K562 (cell line): ENCODE measurements at regions of chr1 and their contacts with region 1.

Region 1: DNA sequence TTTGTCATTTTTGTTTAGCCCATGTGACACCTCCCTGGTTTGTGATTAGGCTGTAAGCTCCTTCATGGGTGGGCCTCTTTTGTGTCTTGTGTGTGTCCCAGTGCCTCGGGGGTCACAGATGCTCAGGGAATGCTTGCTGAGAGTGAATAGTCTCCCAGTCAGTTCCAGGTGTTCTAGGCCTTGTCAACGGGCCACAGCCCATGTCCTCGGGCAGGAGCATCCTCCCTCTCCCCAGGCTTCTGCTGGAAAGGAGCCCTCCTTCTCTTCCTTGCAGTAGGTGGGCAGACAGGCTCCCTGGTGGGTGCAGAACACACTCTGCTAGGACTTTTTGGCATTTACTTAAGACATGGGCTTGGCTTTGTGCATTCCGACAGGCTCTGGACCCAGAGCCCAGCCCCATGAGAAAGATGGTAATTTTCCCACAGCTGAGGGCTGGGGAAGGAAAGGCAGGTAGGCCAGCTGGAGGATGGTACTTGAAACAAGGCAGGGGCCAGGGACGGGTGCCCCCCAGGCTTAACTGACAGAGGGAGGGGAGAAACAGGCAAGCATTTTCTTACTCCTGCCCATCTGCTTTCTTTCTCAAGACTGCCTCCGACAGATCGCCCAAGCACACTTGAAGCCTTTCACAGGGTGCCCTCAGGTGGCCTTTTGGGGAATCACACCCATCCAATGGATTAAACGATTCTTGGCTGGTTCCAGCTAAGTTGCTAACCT is 7.1 kb upstream of the CPLANE2 start:
- DNase-seq: peak; percentile 77 to 91 (median 82)
- ATAC-seq: peak; percentile 79
- H3K4me3 ChIP-seq: no peak overlapping the region
- H3K27ac ChIP-seq: no peak overlapping the region
- H3K4me1 ChIP-seq: peaks cover 13 to 36% of the 10 kb centered on the region in 2 experiments
- H3K27me3 ChIP-seq: no peaks in the 10 kb centered on the region
- CTCF ChIP-seq: peak; percentile 92 to 98 (median 97)
- EP300 ChIP-seq: no peak
- POLR2A ChIP-seq: no peak
- RAD21 ChIP-seq: peak; percentile 92 to 93

Region 2: GRCh38 chr1:15803354-15803753 is 440.7 kb before region 1 on chr1:
- CTCF ChIA-PET with region 1: no interaction called
- POLR2A ChIA-PET with region 1: no interaction called
- in situ Hi-C with region 1: no loop called
- intact Hi-C with region 1: no loop called
- DNase-seq: peak; percentile 32 to 63 (median 44)
- ATAC-seq: peak; percentile 70
- H3K4me3 ChIP-seq: no peak overlapping the region
- H3K27ac ChIP-seq: no peak overlapping the region
- H3K4me1 ChIP-seq: peaks cover 24 to 25% of the 10 kb centered on the region in 2 experiments
- H3K27me3 ChIP-seq: no peaks in the 10 kb centered on the region
- CTCF ChIP-seq: peak; percentile 59 to 70 (median 67)
- EP300 ChIP-seq: no peak
- POLR2A ChIP-seq: no peak
- RAD21 ChIP-seq: peak; percentile 12 to 66; a peak in 2 of 4 replicates

Region 3: DNA sequence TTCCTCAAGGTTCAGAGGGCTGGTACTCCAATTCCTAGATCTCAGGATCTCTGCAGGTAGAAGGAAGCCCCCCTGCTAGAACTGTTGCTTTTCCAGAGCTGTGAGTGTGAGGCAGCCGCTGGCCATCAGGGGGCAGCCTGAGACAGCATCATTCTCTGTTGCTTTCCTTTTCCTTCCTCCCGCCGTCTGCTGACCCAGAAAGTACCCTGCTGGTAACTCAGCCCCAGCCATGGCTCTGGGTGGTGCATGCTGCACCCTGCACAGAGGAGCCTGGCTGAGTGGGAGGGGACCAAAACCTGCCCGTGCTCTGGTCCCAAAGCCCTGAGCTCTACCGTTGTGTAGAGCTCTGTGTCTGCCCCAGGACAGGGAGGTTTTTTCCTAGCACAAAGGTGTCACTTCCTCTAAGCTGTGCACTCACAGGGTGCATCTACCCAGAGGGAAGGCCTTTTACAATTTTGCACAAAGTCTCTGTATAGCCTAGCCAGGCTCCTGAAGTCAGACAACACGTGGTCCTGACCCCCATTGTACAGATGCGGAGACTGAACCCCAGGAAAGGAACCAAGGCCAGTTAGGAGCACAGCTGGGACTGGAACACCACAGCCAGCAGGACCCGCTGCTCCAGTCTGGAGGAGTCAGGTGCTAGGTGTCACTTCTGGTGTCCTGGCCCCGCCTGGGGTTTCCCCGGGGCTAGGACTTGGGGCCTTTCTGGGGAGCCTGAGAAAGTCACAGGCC is 165.0 kb before region 1 on chr1:
- CTCF ChIA-PET with region 1: interaction called, 38 read pairs
- POLR2A ChIA-PET with region 1: interaction called, 6 read pairs
- in situ Hi-C with region 1: loop called (anchors 5 kb)
- intact Hi-C with region 1: loop called (anchors 1 kb)
- DNase-seq: peak; percentile 71 to 87 (median 76)
- ATAC-seq: peak; percentile 84
- H3K4me3 ChIP-seq: no peak overlapping the region
- H3K27ac ChIP-seq: no peak overlapping the region
- H3K4me1 ChIP-seq: peaks cover 14 to 27% of the 10 kb centered on the region in 2 experiments; a peak in 4 of 5 replicates
- H3K27me3 ChIP-seq: peaks cover 0 to 3% of the 10 kb centered on the region in 2 experiments; a peak in 1 of 5 replicates
- CTCF ChIP-seq: peak; percentile 94 to 97 (median 97)
- EP300 ChIP-seq: no peak
- POLR2A ChIP-seq: no peak
- RAD21 ChIP-seq: peak; percentile 95 to 99

Region 4: DNA sequence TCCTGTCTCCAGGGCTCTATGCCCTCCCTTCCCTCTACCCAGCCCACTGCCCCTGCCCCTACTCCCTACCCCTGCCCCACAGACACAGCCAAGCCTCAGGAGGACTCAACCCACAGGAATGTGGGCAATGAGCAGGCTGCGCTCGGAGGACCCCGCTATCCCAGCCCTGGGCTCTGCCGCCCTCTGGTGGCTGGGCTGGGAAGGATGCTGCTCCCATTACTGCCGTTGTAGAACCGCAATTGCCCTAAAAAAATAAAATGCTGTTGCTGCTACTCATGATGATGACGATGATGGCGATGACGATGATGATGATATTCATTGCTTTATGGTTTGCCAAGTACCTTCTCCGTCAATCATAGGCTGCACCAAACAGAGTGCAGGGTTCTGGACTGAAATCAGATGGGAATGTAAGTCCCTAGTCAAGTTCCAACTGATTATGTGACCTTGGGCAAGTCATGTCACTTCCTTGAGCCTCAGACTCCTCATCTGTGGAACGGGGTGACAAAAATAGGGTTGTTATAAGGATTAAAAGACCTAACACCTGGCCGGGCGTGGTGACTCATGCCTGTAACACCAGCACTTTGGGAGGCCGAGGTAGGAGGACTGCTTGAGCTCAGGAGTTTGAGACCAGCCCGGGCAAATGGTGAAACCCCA is 56.2 kb before region 1 on chr1:
- CTCF ChIA-PET with region 1: interaction called, 8 read pairs
- POLR2A ChIA-PET with region 1: no interaction called
- in situ Hi-C with region 1: no loop called
- intact Hi-C with region 1: loop called (anchors 2 kb)
- DNase-seq: peak; percentile 88 to 95 (median 92)
- ATAC-seq: peak; percentile 94
- H3K4me3 ChIP-seq: no peak overlapping the region
- H3K27ac ChIP-seq: no peak overlapping the region
- H3K4me1 ChIP-seq: peaks cover 6 to 28% of the 10 kb centered on the region in 2 experiments; a peak in 4 of 5 replicates
- H3K27me3 ChIP-seq: no peaks in the 10 kb centered on the region
- CTCF ChIP-seq: peak; percentile 98 to 99 (median 99)
- EP300 ChIP-seq: no peak
- POLR2A ChIP-seq: no peak
- RAD21 ChIP-seq: peak; percentile 100

Region 5: DNA sequence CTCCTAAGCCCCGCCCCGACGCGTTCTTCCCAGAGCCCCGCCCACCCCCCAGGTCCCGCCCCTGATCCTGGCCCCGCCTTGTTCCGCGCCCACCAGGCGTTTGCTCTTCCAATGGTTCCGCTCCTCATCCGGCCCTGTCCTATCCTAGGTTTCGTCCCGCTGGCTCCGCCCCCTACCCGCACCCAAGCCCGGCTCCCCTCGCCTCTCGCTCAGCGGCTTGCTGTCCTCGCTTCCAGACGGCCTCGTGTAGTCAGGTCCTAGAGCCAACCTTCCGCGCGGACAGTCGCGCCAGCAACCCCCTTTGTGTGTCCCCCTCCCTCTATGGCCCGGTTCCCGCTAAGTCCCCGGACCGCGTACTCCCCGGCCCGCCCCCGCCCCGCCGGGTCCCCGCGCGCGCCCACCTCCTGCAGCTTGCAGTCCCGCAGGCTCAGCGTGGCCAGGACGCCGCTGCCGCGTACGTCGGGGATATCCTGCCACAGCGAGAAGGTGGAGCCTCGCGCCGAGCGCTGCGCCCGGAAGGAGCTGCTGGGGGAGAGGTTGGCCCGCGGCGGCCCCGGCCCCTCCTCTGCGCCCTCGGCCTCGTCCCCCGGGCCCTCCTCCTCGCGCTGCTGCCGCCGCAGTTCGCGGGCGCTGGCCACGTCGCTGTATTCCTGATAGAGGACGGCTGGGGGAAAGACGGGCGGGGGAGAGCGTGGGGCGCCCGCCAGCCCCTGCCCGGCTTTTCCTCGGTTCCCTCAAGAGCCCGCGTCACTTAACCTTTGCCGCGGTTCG is 37.4 kb before region 1 on chr1:
- CTCF ChIA-PET with region 1: interaction called, 13 read pairs
- POLR2A ChIA-PET with region 1: interaction called, 5 read pairs
- in situ Hi-C with region 1: no loop called
- intact Hi-C with region 1: loop called (anchors 1 kb)
- DNase-seq: peak; percentile 96 to 100 (median 96)
- ATAC-seq: peak; percentile 94
- H3K4me3 ChIP-seq: peak overlapping the region; percentile 54
- H3K27ac ChIP-seq: peak overlapping the region; percentile 97
- H3K4me1 ChIP-seq: peaks cover 26 to 53% of the 10 kb centered on the region in 2 experiments
- H3K27me3 ChIP-seq: no peaks in the 10 kb centered on the region
- CTCF ChIP-seq: 0 out of 6 replicates have a peak, but pooled peaks of 1 of the 3 experiments have one; percentile 2
- EP300 ChIP-seq: no peak
- POLR2A ChIP-seq: peak; percentile 97
- RAD21 ChIP-seq: 0 out of 4 replicates have a peak, but pooled peaks of 1 of the 2 experiments have one; percentile 2

Region 6: DNA sequence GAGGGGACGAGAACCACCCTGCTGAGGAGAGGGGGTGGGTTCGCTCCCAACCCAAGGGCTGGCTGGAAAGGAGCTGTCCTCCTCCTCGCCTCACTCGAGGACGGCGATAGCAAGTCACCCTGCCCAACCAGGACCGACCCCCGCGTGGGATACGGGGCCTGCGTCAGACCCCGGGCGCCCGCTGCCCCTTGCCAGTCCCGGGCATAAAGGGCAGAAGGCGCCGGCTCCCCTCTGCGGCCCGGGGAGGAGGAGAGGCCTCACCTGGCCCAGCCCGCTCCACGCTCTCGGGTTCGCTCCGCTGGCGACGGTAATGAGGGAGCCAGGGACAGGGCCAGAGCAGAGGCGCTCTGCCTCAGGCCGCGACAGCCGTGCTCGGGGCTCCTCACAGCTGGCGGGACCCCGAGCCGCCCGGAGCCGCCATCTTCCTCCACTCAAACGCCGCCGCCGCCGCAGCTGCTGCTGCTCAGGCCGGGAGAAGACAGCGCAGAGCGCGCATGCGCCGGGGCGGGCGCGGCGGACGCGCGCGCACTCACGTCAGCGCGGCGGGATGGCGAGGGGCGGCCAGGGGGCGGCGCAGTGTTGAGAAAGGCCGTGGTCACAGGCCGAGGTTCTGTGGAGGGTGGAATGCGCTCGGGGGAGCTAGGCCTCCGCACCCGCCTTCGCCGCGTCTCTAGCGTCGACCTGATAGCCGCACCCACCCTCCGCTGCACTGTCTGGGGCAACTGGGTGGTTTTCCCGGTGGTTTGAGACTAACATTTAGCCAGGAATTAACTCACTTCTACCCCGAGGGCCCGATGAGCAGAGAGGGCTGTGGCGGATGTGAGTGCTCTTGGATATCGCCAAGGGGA is 108.1 kb after region 1 on chr1 and contains the start of gene FBXO42:
- CTCF ChIA-PET with region 1: no interaction called
- POLR2A ChIA-PET with region 1: interaction called, 6 read pairs
- in situ Hi-C with region 1: no loop called
- intact Hi-C with region 1: loop called (anchors 5 kb)
- DNase-seq: peak; percentile 96 to 98 (median 96)
- ATAC-seq: peak; percentile 92
- H3K4me3 ChIP-seq: peak within 1 kb of the TSS; percentile 96
- H3K27ac ChIP-seq: peak within 1 kb of the TSS; percentile 88
- H3K4me1 ChIP-seq: peaks cover 19 to 25% of the 10 kb centered on the region in 2 experiments
- H3K27me3 ChIP-seq: no peaks in the 10 kb centered on the region
- CTCF ChIP-seq: peak; percentile 56 to 78 (median 73)
- EP300 ChIP-seq: no peak; the same call in none of the 2 replicates
- POLR2A ChIP-seq: peak; percentile 91
- RAD21 ChIP-seq: peak; percentile 34 to 46
- polyA plus RNA-seq, gene FBXO42: 7.2 to 8.0 TPM